ENCODE measurements at regions of chr5 and their contacts with region 1.

Region 1: GRCh38 chr5:132293066-132293991 is 865 bp upstream of the SLC22A4 start:
- DNase-seq: peak; percentile 94
- ATAC-seq: peak; percentile 77

Region 2: DNA sequence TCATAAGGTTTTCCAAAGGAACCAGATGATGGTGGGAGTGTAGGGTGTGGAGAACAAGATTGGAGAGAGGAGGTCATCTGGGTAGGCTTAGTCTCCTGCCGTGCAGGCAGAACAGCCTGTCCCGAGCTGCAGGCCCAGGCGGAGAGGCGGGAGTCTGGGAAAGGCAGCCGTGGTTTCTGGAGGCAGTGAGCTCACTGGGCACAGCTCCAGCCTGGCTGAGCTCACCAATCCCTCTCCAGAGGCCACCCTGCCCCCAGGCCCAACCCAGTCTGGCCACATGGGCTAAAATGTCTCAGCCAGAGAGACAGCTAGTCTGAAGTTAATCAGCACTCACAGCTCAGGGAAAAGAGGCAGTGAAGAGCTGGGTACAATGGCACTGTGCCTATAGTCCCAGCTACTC is 78.0 kb before region 1 on chr5:
- intact Hi-C with region 1: no loop called
- DNase-seq: peak; percentile 95
- ATAC-seq: peak; percentile 93

Region 3: DNA sequence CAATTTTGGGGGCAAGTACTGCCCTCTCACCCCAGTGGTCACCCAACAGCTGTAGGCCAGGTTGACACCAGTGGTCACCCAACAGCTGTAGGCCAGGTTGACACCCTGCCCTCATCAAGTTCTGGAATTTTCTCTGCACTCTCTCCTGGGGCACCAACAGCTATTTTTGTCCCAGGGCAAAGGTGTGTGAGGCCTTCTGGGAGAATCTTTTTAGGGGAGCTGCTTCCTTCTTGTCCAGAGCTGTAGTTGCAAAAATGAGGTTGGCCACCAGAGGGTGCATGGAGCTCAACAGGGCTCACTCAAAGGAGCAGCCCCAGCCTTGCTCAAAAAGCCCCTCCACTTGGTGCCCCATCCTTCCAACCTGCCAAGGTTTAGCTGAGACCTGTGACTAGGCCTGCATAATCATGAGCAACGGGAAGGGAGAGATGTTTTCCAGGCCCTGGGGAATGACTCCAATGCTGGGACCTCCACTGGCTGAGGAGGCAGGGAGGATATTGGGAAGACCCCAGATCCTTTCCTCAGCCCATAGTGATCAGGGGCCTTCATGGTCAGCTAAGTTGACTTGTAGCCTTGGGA is 55.1 kb before region 1 on chr5:
- intact Hi-C with region 1: loop called (anchors 10 kb)
- DNase-seq: no peak
- ATAC-seq: peak; percentile 70

Region 4: GRCh38 chr5:132369474-132370180 is 76.3 kb after region 1 on chr5 and contains the start of gene SLC22A5:
- intact Hi-C with region 1: loop called (anchors 2 kb)
- DNase-seq: peak; percentile 86
- ATAC-seq: peak; percentile 86
- total RNA-seq, gene SLC22A5: 22.3 TPM

Region 5: GRCh38 chr5:132490486-132491367 is 197.4 kb after region 1 on chr5 and contains the start of gene IRF1:
- intact Hi-C with region 1: loop called (anchors 10 kb)
- DNase-seq: peak; percentile 97
- ATAC-seq: peak; percentile 93
- total RNA-seq, gene IRF1: 12.7 TPM